BJ (cell line): ENCODE measurements at regions of chr14 and their contacts with region 1.

Region 1: DNA sequence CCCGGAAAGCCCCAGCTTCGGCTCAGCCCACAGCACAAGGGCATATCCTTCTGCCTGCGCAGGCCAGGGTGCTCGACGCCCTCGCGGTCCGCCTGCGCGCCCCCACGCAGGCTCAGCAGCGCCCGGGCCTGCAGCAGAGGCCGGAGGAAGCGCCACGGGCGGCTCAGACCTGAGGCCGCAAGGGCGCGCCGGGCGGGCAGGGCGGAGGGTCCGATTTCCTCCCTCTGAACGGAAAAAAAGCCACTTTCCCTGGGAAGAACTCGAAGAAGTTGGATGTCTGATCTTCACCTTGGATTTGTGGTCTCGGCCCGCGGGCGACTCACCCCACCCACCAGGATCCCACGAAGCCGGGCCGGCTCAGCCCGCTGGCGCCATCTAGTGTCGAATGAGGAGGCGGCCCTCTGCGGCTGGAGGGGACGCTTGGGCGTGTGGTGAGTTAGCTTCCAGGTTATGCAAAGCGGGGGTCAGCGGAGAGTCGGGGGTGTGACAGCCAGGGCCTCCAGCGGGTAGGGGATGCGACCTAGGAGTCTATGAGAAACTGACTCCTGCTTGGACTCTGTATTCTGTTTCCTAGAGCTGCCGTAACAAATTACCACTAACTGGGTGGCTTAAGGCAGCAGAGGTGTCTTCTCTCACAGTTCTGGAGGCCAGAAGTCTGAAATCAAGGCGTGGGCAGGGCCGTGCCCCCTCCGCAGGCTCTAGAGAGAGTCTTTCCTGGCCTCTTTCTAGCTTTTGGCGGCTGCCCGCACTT is 40.0 kb upstream of the SRSF5 start:
- DNase-seq: no peak
- H3K4me3 ChIP-seq: peak overlapping the region; percentile 42
- H3K27me3 ChIP-seq: no peaks in the 10 kb centered on the region; the same call in 1 of the 2 replicates
- CTCF ChIP-seq: peak; percentile 99

Region 2: DNA sequence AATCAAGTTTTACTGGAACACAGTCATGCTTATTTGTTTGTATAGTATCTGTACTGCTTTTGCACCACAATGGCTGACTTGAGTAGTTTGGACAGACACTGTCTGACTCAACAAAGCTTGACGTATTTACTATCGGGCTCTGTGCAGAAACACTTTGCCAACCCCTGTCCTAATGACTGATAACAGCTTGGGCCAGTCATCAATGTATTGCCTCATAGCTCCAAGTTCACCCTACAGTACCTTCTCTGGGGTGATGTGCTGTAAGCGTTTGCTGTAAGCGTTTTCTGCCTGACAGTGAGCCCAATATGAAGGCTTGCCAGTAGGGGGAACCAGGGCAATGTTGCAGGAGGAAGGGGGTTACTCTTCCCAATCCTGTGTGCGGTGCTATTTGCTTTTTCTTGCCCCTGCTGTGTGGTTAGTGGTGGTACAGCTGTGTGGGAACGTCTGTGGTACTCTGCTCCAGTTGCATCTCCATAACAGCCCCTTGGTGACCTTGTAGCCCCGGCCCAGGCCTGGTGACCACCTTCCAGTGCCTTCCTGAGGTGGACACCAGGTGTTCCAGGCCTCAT is 146.8 kb before region 1 on chr14:
- CTCF ChIA-PET with region 1: interaction called, 54 read pairs
- POLR2A ChIA-PET with region 1: no interaction called
- DNase-seq: no peak
- H3K4me3 ChIP-seq: no peak overlapping the region
- H3K27me3 ChIP-seq: peaks cover 14% of the 10 kb centered on the region
- CTCF ChIP-seq: peak; percentile 64

Region 3: GRCh38 chr14:69600304-69600891 is 126.5 kb before region 1 on chr14:
- CTCF ChIA-PET with region 1: interaction called, 45 read pairs
- POLR2A ChIA-PET with region 1: no interaction called
- DNase-seq: no peak
- H3K4me3 ChIP-seq: no peak overlapping the region
- H3K27me3 ChIP-seq: no peaks in the 10 kb centered on the region; the same call in 1 of the 2 replicates
- CTCF ChIP-seq: no peak

Region 4: GRCh38 chr14:69611201-69612011 is 115.5 kb before region 1 on chr14 and contains the start of gene SUSD6:
- CTCF ChIA-PET with region 1: interaction called, 45 read pairs
- POLR2A ChIA-PET with region 1: no interaction called
- DNase-seq: no peak
- H3K4me3 ChIP-seq: peak within 1 kb of the TSS; percentile 75
- H3K27me3 ChIP-seq: no peaks in the 10 kb centered on the region
- CTCF ChIP-seq: no peak
- polyA plus RNA-seq, gene SUSD6: 15.9 and 20.3 TPM in 2 replicates

Region 5: GRCh38 chr14:69629225-69630127 is 97.5 kb before region 1 on chr14:
- CTCF ChIA-PET with region 1: interaction called, 11 read pairs
- POLR2A ChIA-PET with region 1: no interaction called
- DNase-seq: no peak
- H3K4me3 ChIP-seq: no peak overlapping the region
- H3K27me3 ChIP-seq: no peaks in the 10 kb centered on the region
- CTCF ChIP-seq: no peak